ENCODE measurements at regions of chr4 and their contacts with region 1.

Region 1: DNA sequence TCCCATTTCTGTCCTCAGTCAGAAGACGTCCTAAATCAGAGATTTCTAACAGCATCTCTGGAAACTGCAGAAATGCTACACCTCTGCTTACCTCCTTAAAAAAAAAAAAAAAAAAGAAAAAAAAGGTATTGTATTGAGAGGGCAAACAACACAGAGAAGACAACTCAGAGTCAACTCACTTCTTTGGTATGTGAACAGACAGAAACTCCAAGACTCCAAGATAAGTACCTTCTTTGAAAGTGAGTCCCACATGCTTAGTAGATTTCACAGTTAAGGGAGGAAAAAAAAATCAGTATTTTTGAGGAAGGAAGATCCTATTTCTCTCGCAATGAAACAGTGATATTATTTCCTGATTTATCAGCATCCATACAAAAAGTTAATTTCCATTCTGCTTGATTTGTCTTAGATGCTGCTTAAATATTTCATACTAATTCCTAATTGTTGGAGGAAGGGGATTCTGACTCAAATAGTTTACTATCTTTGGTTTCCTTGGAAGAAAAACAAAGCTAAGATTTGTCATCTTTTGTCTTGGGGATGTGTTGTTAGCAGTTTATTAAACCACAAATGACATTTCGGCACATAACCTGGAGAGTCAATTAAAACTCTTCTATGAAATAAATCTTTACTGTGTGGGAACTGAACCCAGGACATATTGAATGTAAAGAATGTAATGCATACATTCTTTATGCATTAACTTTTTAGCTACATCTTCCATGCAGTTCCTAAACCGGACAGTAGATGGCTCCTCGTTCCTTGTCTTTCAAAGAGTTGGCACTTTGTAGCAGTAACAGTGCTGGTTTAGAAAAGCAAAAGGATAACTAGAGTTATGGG is 4.7 kb downstream of the RASGEF1B start:
- H3K4me3 ChIP-seq: no peak overlapping the region
- H3K27ac ChIP-seq: no peak overlapping the region
- H3K4me1 ChIP-seq: peaks cover 11% of the 10 kb centered on the region
- CTCF ChIP-seq: peak; percentile 42; the same call in 1 of the 2 replicates

Region 2: DNA sequence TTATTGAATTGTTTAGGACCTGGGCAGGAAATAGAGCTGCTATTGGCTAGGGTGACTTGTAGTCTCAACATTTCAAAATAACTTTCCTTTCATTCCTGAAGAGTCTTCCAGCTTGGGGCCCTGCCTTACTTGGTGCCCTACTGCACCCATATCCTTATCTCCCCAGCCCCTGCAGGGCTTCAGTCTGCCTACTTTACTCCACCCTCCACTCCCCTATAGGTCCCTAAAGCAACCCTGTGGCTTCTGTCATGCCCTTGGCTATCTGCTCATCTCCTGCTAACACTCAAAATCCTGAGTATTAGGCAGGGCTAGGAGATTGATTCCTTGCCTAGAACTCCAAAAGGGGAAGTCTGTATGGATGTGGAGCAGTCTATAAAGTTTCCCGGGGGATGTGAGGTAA is 194.4 kb before region 1 on chr4:
- CTCF ChIA-PET with region 1: no interaction called
- POLR2A ChIA-PET with region 1: no interaction called
- H3K4me3 ChIP-seq: no peak overlapping the region
- H3K27ac ChIP-seq: no peak overlapping the region
- H3K4me1 ChIP-seq: no peaks in the 10 kb centered on the region
- CTCF ChIP-seq: no peak

Region 3: GRCh38 chr4:81844717-81845116 is 377.7 kb after region 1 on chr4:
- CTCF ChIA-PET with region 1: interaction called, 25 read pairs
- POLR2A ChIA-PET with region 1: interaction called, 4 read pairs
- H3K4me3 ChIP-seq: no peak overlapping the region
- H3K27ac ChIP-seq: no peak overlapping the region
- H3K4me1 ChIP-seq: no peaks in the 10 kb centered on the region
- CTCF ChIP-seq: no peak